Left cardiac atrium (tissue), 4 donors: ENCODE measurements at regions of chr19 and their contacts with region 1.

Region 1: DNA sequence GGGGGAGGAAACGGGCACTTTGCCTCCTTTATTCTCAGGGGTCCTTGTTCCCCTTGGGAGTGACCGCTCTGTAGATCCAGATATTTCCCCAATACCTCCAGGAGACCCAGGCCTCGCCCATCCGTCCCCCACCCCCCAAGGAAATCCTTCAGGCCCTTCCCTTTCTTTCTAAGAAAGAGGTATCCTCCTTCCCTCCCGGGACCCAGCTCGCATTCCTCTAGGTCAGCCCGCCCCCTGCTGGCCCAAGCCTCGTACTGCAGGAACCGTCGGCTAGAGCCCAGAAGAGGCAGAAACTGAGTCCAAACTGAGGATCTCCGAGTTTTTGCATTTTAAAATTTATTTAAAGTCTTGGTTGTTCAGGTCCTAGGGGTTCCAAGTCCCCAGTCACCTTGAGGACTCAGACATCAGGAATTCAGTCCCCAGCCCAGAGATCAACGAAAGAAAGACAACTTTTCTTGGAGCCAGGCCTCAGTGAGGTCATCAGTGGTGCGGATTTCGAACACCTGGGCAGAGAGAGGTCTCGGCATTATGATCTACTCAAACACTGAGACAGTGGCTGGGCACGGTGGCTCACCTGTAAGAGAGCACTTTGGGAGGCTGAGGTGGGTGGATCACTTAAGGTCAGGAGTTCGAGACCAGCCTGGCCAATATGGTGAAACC is 7.5 kb upstream of the LRFN1 start:
- DNase-seq: peak; percentile 85
- ATAC-seq: peak; percentile 80 to 86

Region 2: DNA sequence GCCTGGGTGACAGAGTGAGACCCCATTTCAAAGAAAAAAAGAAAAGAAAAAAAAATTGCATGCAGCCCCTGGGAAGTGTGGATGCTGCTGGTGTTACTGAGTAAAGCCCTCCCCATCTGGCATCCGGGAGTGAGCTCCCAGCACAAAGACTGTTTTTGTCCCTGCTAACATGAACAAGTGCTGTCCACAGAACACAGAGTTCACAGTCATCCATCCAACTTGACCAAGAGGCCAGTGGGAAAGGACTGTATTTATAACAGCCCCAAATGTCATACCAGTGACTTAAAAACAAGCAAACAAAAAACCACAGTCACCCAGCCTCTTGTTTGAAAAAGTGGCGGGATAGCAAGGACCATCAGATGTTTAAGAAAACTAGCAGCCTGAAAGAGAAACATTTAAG is 363.4 kb before region 1 on chr19:
- intact Hi-C with region 1: loop called in 1 of 2 experiments (anchors 5 kb)
- DNase-seq: no peak
- ATAC-seq: no peak

Region 3: DNA sequence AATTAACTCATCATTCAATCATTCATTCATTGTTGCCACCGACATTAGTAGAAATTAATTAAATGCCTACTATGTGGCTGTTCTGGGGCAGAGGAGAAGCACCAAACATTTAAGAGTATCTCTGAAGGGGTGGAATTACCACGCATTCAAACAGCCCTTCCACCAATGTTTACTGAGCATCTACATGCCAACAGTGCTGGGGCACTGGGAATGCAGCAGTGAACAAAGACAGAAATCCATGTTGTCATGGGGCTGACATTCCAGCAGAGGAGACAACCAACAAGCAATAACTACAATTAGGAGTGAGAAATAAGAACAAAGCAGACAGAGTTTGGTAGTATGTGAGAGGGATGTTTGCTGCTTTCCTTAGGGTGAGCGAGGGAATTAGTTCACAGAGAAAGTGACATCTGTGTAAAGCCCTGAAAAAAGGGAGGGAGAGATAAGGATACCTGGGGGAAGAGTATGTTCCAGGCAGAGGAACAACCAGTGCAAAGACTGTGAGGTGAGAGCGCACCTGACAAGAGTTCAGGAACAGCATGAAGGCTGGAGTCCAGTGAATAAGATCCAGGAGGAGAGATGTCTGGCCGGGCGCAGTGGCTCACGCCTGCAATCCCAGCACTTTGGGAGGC is 203.9 kb before region 1 on chr19:
- intact Hi-C with region 1: loop called (anchors 1 to 2 kb)
- DNase-seq: no peak
- ATAC-seq: no peak

Region 4: DNA sequence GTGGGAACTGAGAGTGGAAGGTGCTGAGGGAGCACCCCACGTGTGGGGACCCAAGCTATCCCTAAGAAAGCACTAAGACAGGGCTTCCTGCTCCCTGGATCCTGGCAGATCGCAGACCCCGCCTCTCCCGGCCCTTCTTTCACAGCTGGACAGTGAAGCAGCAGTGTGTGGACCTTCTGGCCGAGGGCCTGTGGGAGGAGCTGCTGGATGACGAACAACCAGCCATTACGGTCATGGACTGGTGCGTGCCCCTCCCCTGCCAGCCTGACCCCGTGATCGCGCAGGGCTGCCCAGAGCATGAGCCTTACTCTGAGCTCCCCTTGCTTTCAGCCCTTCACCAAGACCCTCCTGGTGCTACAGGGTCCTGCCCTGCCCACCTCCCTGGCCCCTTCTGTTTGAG is 129.2 kb before region 1 on chr19:
- intact Hi-C with region 1: loop called in 1 of 2 experiments (anchors 10 kb)
- DNase-seq: peak; percentile 58
- ATAC-seq: peak; percentile 78 to 92